Cardiac septum (tissue), 1 donor: ENCODE measurements at regions of chr13 and their contacts with region 1.

Region 1: GRCh38 chr13:98142380-98143156 is at the start of gene FARP1:
- DNase-seq: peak; percentile 80
- total RNA-seq, gene FARP1: 71.3 TPM

Region 2: GRCh38 chr13:97946951-97947588 is 195.5 kb before region 1 on chr13:
- intact Hi-C with region 1: no loop called
- DNase-seq: no peak

Region 3: DNA sequence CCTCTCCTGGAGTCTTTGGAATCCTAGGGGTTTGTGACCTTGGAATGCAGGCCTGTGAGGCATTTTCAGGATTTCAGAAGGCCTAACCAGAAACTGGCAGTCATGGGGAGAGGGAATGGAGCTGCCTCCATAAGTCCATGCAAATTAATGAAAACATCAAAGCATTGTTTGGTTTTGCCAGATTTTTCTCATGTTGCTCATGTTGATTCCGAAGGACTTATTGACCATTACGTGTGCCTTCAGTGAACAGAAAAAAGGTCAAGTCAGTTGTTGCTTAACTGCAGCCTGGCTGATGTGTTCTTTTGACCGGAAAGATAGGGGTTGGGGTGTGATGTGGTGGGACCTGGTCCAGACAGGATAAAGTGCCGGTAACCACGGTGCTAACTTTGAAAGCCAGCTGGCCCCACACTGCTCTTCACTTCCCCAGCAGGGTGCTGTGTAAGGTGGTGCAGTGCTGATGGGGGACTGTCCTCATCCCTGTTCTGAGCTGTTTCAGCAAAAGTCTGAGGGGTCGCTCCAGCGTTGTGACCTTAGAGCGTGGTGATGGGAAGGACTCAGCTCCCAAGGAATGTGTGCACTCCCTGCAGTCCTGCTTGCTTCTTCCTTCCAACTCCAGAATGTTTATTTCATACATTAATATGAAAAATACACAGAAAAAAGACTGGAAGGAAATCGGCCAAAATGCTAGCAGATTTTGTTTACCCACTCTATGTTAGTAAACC is 31.0 kb after region 1 on chr13:
- intact Hi-C with region 1: loop called (anchors 2 kb)
- DNase-seq: no peak

Region 4: GRCh38 chr13:98214008-98214643 is 71.6 kb after region 1 on chr13:
- intact Hi-C with region 1: loop called (anchors 5 kb)
- DNase-seq: no peak

Region 5: DNA sequence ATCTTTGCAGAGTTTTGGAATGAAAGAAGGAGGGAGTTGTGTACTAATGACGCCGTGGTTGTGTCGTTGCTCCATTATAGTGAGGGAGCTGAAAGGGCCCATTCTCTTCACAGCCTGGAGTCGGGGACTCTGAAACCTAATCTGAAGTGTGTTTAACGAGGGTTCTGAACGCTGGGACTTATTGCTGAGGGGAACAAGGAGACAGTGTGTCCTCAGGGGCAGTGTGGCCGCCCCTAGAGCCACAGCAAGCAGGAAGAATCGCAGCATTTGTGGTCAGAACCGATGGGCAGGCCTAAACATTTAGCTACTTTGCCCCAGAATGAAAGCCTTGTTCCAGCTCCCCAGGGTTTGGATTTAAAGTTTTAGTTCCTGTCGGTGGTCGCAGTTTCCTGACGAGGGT is 190.9 kb after region 1 on chr13:
- intact Hi-C with region 1: no loop called
- DNase-seq: no peak

Region 6: DNA sequence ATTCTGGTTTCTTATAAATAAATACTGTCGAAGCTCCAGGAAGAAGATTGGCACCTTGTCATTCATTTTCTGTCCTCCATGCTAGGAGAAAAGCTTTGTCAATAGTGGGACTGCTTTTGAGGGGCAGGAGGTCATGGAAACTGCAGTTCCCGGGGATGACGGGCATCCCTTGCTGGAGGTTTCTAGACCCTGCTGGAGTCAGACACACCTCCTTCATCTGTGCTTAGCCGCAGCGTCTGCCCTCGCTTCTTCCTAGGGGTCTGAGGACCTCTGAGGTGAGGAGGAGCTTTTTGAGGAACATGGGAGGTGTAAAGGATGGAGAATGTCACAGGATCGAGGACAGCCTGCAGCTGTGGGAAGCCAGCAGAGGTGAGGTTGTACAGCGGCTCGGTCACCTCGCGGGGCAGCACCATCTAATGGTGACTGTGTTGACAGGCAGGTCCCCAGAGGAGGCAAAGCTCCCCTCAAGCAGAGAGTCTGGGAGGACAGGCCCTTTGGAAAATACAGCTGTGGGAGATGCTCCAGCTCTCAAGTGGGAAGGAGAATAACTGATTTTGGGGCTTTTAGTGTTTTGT is 207.2 kb after region 1 on chr13:
- intact Hi-C with region 1: loop called (anchors 5 kb)
- DNase-seq: peak; percentile 17

Region 7: GRCh38 chr13:98523455-98524102 is 381.0 kb after region 1 on chr13:
- intact Hi-C with region 1: no loop called
- DNase-seq: no peak

Region 8: DNA sequence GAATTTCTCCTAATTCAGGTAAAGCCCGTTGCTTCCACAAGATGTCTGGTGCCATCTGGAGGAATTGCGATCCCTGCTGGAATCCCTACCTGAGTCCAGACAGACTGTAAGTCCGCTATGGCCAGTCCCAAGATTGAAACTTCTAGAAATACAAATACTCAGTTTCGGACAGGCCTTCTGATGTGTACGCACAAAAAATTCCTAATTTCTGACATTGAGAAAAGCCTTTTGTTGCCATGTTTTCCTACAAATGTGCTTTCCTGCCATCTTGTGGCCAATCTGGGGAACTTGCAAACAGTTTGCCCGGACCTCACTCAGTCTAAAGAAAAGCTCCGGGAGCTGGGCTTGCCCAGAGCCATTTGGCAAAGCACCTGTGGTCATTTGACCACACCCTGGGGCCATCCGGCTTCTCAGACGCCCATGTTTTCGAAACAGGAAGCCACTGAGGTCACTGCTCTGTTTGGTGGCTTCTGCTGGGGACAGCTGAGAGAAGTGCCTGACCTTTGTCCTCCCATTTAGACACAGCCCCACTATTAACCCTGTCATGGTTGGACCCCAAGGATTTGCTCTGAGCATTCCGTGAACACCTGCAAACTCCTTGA is 530.5 kb after region 1 on chr13:
- intact Hi-C with region 1: loop called (anchors 5 kb)
- DNase-seq: peak; percentile 80